ENCODE measurements at regions of chr2 and their contacts with region 1.

Region 1: DNA sequence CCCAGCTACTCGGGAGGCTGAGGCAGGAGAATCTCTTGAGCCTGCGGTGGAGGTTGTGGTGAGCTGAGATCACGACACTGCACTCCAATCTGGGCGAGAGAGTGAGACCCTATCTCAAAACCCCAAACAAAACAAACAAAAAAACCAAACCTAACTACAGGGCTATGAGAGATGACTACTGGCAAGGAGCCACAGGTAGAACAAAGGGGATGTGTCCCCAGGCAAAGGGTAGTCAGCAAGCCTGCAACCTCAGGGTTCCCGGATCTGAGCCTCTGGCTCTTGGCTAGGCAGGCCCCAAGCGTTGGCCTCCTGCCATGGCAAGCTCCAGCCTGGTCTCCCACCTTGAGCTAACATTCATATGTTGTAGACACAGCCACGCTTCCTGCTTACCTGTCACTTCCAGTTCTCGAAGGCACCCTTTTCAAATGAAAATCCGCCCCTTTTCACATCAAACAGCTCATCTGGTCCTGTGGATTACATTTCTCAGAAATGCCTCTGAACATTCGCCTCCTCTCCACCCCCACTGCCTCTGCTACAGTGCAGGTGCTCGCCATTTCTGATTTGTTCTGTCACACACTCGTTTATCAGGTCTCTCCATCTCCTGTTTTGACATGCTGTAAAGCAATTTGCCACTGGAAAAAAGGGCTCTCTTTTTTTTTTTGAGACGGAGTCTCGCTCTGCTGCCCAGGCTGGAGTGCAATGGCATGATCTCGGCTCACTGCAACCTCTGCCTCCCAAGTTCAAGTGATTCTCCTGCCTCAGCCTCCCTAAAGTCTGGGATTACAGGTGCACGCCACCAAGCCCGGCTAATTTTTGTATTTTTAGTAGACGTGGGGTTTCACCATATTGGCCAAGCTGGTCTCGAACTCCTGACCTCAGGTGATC is 13.1 kb upstream of the ACTR3 start:
- DNase-seq: peak in 1 of 2 experiments; percentile 59
- H3K4me3 ChIP-seq: no peak overlapping the region
- H3K4me3 Mint-ChIP-seq: peak overlapping the region; percentile 50
- H3K27ac Mint-ChIP-seq: peak overlapping the region; percentile 53
- H3K4me1 ChIP-seq: peaks cover 26% of the 10 kb centered on the region
- H3K4me1 Mint-ChIP-seq: peaks cover 34% of the 10 kb centered on the region
- H3K27me3 ChIP-seq: no peaks in the 10 kb centered on the region
- H3K27me3 Mint-ChIP-seq: no peaks in the 10 kb centered on the region
- CTCF ChIP-seq: no peak

Region 2: DNA sequence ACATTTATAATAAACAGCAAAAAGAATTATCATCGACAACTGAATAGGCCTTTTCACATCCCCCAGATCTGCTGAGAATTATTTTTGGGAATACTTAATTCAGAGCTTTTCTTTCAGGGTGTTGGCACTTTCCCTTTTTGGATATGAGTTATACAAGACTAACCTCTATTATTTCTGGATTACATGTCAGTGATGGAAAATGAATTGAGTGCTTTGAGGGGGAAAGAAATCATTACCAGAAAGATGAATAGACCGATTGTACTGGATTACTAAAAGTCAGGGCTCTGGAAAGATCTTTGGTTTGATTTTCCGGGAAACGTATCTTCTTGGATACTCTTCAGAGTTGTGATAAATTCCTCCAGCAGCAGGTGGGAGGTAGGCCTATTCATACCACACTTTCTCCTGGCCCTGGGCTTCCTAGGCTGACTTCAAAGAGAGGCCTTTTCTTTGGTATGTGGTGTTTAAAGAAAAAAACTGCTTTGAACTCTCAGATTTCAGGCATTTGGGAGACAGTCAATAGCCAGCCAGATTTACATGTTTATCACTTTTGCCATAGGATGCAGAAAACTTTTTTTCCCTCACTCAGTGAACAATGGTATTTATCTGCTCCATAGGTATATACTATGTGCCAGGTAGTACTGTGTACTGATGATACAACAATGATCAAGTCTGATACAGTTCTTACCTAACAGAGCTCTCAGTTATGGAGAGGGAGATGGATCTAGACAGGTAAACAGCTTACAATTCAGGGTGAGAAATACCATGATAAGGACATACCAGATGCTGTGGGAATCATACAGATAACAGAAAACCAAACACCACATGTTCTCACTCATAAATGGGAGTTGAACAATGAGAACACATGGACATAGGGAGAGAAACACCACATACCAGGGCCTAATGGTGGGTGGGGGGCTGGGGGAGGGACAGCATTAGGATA is 50.1 kb before region 1 on chr2:
- CTCF ChIA-PET with region 1: no interaction called
- POLR2A ChIA-PET with region 1: no interaction called
- intact Hi-C with region 1: loop called (anchors 2 kb)
- DNase-seq: peak; percentile 80 to 85
- H3K4me3 ChIP-seq: no peak overlapping the region
- H3K4me3 Mint-ChIP-seq: peak overlapping the region; percentile 39
- H3K27ac Mint-ChIP-seq: peak overlapping the region; percentile 92
- H3K4me1 ChIP-seq: peaks cover 54% of the 10 kb centered on the region
- H3K4me1 Mint-ChIP-seq: peaks cover 51% of the 10 kb centered on the region
- H3K27me3 ChIP-seq: no peaks in the 10 kb centered on the region
- H3K27me3 Mint-ChIP-seq: no peaks in the 10 kb centered on the region
- CTCF ChIP-seq: no peak

Region 3: GRCh38 chr2:113889471-113890252 is 12.9 kb after region 1 on chr2 and contains the start of gene ACTR3:
- CTCF ChIA-PET with region 1: no interaction called
- POLR2A ChIA-PET with region 1: no interaction called
- intact Hi-C with region 1: loop called (anchors 1 kb)
- DNase-seq: peak; percentile 98 to 99
- H3K4me3 ChIP-seq: peak within 1 kb of the TSS; percentile 98
- H3K4me3 Mint-ChIP-seq: peak within 1 kb of the TSS; percentile 80
- H3K27ac Mint-ChIP-seq: peak within 1 kb of the TSS; percentile 53
- H3K4me1 ChIP-seq: peaks cover 49% of the 10 kb centered on the region
- H3K4me1 Mint-ChIP-seq: peaks cover 54% of the 10 kb centered on the region
- H3K27me3 ChIP-seq: no peaks in the 10 kb centered on the region
- H3K27me3 Mint-ChIP-seq: no peaks in the 10 kb centered on the region
- CTCF ChIP-seq: no peak
- total RNA-seq, gene ACTR3: 340 and 341 TPM in 2 replicates

Region 4: DNA sequence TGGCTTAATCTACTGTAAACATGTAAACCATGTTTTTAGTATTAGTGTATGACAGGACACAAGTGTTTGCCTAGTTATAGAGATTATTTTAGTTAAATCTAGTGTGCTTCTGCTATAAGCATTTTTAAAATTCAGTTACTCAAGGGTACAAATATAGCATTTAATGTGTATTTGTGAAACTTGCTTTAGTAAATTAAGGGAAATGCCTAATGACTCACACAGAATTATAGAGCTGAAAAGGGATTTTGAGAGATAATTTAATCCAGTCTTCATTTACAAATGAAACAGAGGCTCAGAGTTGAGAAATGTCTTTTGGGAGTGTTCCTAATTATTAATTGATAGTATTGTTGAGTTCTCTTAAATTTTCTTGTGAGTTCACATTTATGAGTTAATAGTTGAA is 21.3 kb after region 1 on chr2:
- CTCF ChIA-PET with region 1: no interaction called
- POLR2A ChIA-PET with region 1: interaction called, 22 read pairs
- intact Hi-C with region 1: no loop called
- DNase-seq: no peak
- H3K4me3 ChIP-seq: no peak overlapping the region
- H3K4me3 Mint-ChIP-seq: no peak overlapping the region
- H3K27ac Mint-ChIP-seq: no peak overlapping the region
- H3K4me1 ChIP-seq: peaks cover 50% of the 10 kb centered on the region
- H3K4me1 Mint-ChIP-seq: peaks cover 64% of the 10 kb centered on the region
- H3K27me3 ChIP-seq: no peaks in the 10 kb centered on the region
- H3K27me3 Mint-ChIP-seq: no peaks in the 10 kb centered on the region
- CTCF ChIP-seq: no peak